ENCODE measurements at regions of chr14 and their contacts with region 1.

Region 1: GRCh38 chr14:95431199-95432143 is 85.0 kb downstream of the SYNE3 start:
- DNase-seq: peak; percentile 27
- H3K4me3 ChIP-seq: no peak overlapping the region
- H3K27ac ChIP-seq: no peak overlapping the region
- H3K4me1 ChIP-seq: no peaks in the 10 kb centered on the region
- H3K27me3 ChIP-seq: no peaks in the 10 kb centered on the region
- CTCF ChIP-seq: peak; percentile 40 to 50
- POLR2A ChIP-seq: no peak

Region 2: DNA sequence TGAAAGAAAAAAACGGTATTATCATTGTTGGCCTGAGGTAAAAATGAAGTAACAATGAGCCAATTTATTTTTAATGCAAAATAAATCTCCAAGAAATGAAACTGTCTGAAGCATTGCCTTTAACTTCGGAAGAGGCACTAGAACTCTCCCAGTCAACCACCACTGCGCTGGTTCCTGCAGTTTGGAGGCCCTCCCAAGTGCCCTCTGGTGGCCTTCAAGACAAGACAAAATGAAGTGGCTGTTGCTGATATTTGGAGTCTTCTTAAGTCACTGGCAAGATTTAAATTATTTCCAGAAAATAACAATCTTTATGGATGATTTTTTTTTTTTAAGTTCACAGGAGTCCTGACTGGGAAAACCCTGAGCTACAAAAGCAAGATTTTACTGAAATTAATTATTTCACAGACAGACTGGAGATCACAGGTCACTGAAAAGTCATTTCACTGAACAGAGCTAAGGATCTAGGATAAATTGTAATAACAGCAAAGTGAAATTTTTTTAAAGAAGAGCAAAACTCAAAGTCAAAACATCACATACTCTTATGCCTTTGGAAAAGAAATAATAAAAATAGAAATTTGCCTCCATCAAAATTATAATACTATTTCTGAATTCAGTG is 332.4 kb before region 1 on chr14:
- CTCF ChIA-PET with region 1: interaction called, 6 read pairs
- POLR2A ChIA-PET with region 1: no interaction called
- dilution Hi-C with region 1: no loop called
- intact Hi-C with region 1: loop called (anchors 5 kb)
- DNase-seq: peak; percentile 25
- H3K4me3 ChIP-seq: no peak overlapping the region
- H3K27ac ChIP-seq: no peak overlapping the region
- H3K4me1 ChIP-seq: no peaks in the 10 kb centered on the region
- H3K27me3 ChIP-seq: no peaks in the 10 kb centered on the region
- CTCF ChIP-seq: peak; percentile 38 to 49
- POLR2A ChIP-seq: no peak

Region 3: GRCh38 chr14:95697764-95698163 is 266.3 kb after region 1 on chr14:
- CTCF ChIA-PET with region 1: no interaction called
- POLR2A ChIA-PET with region 1: no interaction called
- dilution Hi-C with region 1: no loop called
- intact Hi-C with region 1: no loop called
- DNase-seq: no peak
- H3K4me3 ChIP-seq: no peak overlapping the region
- H3K27ac ChIP-seq: no peak overlapping the region
- H3K4me1 ChIP-seq: no peaks in the 10 kb centered on the region
- H3K27me3 ChIP-seq: no peaks in the 10 kb centered on the region
- CTCF ChIP-seq: no peak
- POLR2A ChIP-seq: no peak